ENCODE measurements at regions of chr11 and their contacts with region 1.

Region 1: DNA sequence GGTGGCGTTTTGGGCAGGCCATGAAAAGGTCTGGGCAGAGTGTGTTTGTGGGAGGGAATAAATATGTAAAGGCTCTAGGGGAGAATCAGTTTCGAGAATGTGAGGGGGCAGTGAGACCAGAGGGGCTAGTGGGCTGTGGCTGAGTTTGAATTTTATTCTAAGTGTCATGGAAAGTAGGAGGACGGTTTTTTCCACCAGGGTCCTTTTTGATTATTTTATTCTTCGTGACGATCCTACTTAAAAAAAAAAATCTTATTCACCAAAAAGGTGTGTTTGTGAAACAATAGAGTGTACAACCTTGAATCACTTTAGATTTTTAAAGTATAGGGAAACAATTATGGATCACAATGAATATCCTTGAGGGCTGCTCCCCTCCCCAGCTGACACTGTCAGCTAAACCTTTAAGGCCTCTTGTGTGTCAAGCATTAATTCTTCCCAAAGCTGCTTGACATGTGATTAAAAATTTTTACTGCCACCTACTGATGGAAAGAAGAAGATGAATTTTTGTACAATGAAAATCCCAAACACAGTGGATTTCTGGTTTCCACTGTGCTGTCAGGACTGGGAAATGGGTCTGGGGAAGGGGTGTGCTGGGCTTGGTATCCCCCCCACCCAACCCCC is 107.5 kb upstream of the OR4B1 start:
- DNase-seq: no peak
- ATAC-seq: peak; percentile 51 to 81 (median 62)
- H3K4me3 ChIP-seq: peak overlapping the region; percentile 49
- H3K27ac ChIP-seq: peak overlapping the region; percentile 50
- H3K4me1 ChIP-seq: peaks cover 18% of the 10 kb centered on the region
- H3K27me3 ChIP-seq: no peaks in the 10 kb centered on the region
- CTCF ChIP-seq: peak; percentile 41

Region 2: DNA sequence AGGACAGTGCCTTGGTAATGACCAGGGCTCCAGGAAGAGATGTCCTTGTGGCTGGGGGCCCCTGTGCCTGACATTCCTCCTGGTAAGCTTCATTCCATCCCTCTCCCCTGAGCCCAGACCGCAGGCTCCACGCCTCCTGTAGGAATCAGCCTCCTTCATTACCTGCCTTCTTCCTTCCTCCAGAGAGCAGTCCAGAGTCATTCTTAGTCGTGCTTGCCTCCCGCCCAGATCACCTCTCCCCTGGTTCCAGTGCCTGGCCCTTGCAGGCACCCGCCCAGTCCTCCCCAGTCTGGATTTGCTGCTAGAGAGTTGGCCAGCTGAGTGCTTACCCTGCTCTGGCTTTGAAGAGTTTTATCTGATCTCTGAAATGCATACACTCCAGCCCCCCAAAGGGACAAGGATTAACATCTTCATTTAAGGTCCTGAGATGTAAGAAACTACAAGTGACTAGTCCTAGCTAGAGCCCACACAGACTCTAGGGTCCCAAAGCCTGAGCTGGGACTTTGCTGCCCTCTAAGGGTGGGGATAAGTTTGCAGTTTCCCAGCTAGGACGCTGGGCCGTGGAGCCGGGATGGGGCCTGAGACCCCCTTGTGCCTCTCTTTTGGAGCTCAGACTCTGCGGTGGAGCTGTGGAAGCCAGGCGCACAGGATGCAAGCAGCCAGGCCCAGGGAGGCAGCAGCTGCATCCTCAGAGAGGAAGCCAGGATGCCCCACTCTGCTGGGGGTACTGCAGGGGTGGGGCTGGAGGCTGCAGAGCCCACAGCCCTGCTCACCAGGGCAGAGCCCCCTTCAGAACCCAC is 849.8 kb before region 1 on chr11:
- intact Hi-C with region 1: no loop called
- DNase-seq: peak in 1 of 2 donors; percentile 54
- ATAC-seq: peak; percentile 50 to 62 (median 62)
- H3K4me3 ChIP-seq: peak overlapping the region; percentile 55
- H3K27ac ChIP-seq: peak overlapping the region; percentile 9
- H3K4me1 ChIP-seq: peaks cover 8% of the 10 kb centered on the region
- H3K27me3 ChIP-seq: no peaks in the 10 kb centered on the region
- CTCF ChIP-seq: peak; percentile 68

Region 3: DNA sequence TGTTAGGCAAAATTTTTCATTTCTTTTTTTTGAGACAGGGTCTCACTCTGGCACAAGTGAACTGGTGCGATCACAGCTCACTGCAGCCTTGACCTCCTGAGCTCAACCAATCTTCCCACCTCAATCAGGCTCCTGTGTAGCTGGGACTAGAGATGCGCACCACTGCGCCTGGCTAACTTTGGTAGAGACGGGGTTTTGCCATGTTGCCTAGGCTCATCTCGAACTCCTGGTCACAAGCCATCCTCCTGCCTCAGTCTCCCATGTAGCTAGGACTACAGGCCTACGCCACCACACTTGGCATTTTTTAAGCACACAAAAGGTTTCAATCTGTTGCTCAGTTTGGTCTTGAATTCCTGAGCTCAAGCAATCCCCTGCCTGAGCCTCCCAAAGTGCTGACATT is 351.1 kb before region 1 on chr11:
- intact Hi-C with region 1: no loop called
- DNase-seq: peak in 1 of 2 donors; percentile 15
- ATAC-seq: no peak
- H3K4me3 ChIP-seq: no peak overlapping the region
- H3K27ac ChIP-seq: no peak overlapping the region
- H3K4me1 ChIP-seq: no peaks in the 10 kb centered on the region
- H3K27me3 ChIP-seq: no peaks in the 10 kb centered on the region
- CTCF ChIP-seq: no peak

Region 4: GRCh38 chr11:47847892-47848635 is 261.1 kb before region 1 on chr11 and contains the start of gene NUP160:
- intact Hi-C with region 1: loop called (anchors 5 to 10 kb)
- DNase-seq: peak; percentile 86 to 92
- ATAC-seq: peak; percentile 91 to 96 (median 92)
- H3K4me3 ChIP-seq: peak within 1 kb of the TSS; percentile 82
- H3K27ac ChIP-seq: peak within 1 kb of the TSS; percentile 93
- H3K4me1 ChIP-seq: peaks cover 40% of the 10 kb centered on the region
- H3K27me3 ChIP-seq: no peaks in the 10 kb centered on the region
- CTCF ChIP-seq: no peak
- total RNA-seq, gene NUP160: 9.0 to 14.0 (median 12.1) TPM

Region 5: DNA sequence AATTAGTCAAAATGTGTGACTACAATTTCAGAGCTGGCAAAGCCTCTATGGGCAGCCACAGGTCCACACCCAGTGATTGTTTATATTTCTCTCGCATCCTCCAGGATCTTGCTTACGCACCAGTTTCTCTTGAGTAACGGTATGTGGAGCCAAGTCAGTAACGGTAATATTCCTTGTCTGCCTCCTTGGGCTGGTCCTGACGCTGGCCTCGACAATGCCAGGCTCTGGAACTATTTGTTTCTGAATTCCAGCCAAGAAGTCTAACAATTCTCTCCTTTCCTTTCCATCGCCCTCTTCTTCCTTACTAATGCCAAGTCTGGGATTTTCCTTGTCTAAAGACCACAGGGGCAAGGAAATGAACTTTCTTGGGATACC is 251.0 kb before region 1 on chr11:
- intact Hi-C with region 1: loop called (anchors 5 to 10 kb)
- DNase-seq: no peak
- ATAC-seq: no peak
- H3K4me3 ChIP-seq: no peak overlapping the region
- H3K27ac ChIP-seq: no peak overlapping the region
- H3K4me1 ChIP-seq: no peaks in the 10 kb centered on the region
- H3K27me3 ChIP-seq: no peaks in the 10 kb centered on the region
- CTCF ChIP-seq: no peak

Region 6: GRCh38 chr11:47932544-47932943 is 176.6 kb before region 1 on chr11:
- intact Hi-C with region 1: loop called (anchors 1 to 2 kb)
- DNase-seq: no peak
- ATAC-seq: no peak
- H3K4me3 ChIP-seq: no peak overlapping the region
- H3K27ac ChIP-seq: no peak overlapping the region
- H3K4me1 ChIP-seq: peaks cover 5% of the 10 kb centered on the region
- H3K27me3 ChIP-seq: no peaks in the 10 kb centered on the region
- CTCF ChIP-seq: no peak

Region 7: GRCh38 chr11:47941907-47942558 is 167.1 kb before region 1 on chr11:
- intact Hi-C with region 1: loop called in 1 of 2 experiments (anchors 2 kb)
- DNase-seq: no peak
- ATAC-seq: no peak
- H3K4me3 ChIP-seq: no peak overlapping the region
- H3K27ac ChIP-seq: no peak overlapping the region
- H3K4me1 ChIP-seq: no peaks in the 10 kb centered on the region
- H3K27me3 ChIP-seq: no peaks in the 10 kb centered on the region
- CTCF ChIP-seq: no peak

Region 8: DNA sequence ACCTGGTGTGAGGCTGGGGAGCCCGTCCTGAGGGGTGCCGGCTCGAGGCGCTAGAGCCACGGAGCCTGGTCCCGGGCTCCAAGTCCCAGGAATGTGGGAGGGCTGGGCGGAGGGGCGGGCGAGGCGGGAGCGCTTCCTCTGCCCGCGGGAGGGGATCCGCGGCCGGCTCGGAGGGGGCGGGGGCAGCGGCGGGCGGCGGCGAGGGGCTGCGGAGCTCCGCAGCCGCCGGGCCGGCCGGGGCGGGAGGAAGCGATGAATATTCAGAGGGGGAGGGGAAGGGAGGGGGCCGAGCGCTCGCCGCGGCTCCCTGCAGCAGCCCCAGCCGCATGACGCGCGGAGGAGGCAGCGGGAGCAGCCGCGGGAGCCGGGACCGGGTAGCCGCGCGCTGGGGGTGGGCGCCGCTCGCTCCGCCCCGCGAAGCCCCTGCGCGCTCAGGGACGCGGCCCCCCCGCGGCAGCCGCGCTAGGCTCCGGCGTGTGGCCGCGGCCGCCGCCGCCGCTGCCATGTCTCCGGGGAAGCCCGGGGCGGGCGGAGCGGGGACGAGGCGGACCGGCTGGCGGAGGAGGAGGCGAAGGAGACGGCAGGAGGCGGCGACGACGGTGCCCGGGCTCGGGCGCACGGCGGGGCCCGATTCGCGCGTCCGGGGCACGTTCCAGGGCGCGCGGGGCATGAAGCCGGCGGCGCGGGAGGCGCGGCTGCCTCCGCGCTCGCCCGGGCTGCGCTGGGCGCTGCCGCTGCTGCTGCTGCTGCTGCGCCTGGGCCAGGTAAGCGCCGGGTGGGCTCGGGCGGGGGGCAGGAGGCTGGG is 128.7 kb before region 1 on chr11 and contains the start of gene PTPRJ:
- intact Hi-C with region 1: loop called in 1 of 2 experiments (anchors 5 kb)
- DNase-seq: peak; percentile 57 to 73
- ATAC-seq: peak; percentile 62 to 68 (median 67)
- H3K4me3 ChIP-seq: peak within 1 kb of the TSS; percentile 90
- H3K27ac ChIP-seq: peak within 1 kb of the TSS; percentile 53
- H3K4me1 ChIP-seq: peaks cover 8% of the 10 kb centered on the region
- H3K27me3 ChIP-seq: peaks cover 0 to 2% (median 0%) of the 10 kb centered on the region in 3 donors
- CTCF ChIP-seq: no peak
- total RNA-seq, gene PTPRJ: 2.6 to 12.4 (median 4.7) TPM